ENCODE measurements at regions of chr1 and their contacts with region 1.

Region 1: DNA sequence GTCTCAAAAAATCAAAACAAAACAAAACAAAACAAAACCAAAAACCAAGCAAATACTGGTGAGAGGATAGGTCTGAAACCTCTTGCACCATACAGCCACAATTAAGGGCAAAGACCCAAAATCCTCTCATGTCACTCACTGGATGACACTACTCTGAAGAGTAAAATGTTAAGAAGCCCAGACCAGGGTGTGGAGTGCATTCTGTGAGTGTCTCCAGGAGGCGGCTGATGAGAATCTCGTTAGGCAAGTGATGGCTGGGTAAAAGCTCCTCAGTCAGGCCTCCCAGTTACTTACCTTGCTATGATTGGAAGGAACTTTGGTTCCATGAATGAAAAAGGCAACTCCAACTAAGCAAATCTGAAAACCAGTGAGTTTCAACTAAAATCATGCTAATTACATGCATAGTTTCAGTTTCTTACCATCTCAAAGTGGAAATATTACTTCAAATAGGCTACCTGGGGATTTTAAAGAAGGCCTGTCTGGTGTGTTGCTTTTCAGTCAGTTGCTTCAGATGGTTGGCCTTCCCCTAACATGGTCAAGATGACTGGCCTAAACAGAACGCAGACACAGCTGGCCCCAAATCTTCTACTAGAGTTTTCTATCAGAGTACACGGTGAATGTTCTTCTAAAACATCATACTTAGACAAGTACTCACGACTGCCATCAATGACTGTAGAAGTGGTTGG is 95.1 kb downstream of the KIAA0319L start:
- DNase-seq: no peak
- ATAC-seq: peak; percentile 46
- H3K4me3 ChIP-seq: no peak overlapping the region
- H3K4me3 Mint-ChIP-seq: no peak overlapping the region
- H3K27ac ChIP-seq: peak overlapping the region in 1 of 2 donors; percentile 18
- H3K27ac Mint-ChIP-seq: peak overlapping the region; percentile 58
- H3K4me1 ChIP-seq: peaks cover 3% of the 10 kb centered on the region
- H3K4me1 Mint-ChIP-seq: peaks cover 11% of the 10 kb centered on the region
- H3K27me3 ChIP-seq: no peaks in the 10 kb centered on the region
- H3K27me3 Mint-ChIP-seq: no peaks in the 10 kb centered on the region
- CTCF ChIP-seq: no peak

Region 2: GRCh38 chr1:34426325-34426891 is 1035.7 kb before region 1 on chr1:
- CTCF ChIA-PET with region 1: no interaction called
- POLR2A ChIA-PET with region 1: no interaction called
- intact Hi-C with region 1: no loop called
- DNase-seq: no peak
- ATAC-seq: no peak
- H3K4me3 ChIP-seq: no peak overlapping the region
- H3K4me3 Mint-ChIP-seq: no peak overlapping the region
- H3K27ac ChIP-seq: no peak overlapping the region
- H3K27ac Mint-ChIP-seq: no peak overlapping the region
- H3K4me1 ChIP-seq: no peaks in the 10 kb centered on the region
- H3K4me1 Mint-ChIP-seq: no peaks in the 10 kb centered on the region
- H3K27me3 ChIP-seq: peaks cover 0 to 5% of the 10 kb centered on the region in 2 experiments
- H3K27me3 Mint-ChIP-seq: peaks cover 27% of the 10 kb centered on the region
- CTCF ChIP-seq: no peak

Region 3: GRCh38 chr1:35499652-35500176 is 37.6 kb after region 1 on chr1:
- CTCF ChIA-PET with region 1: no interaction called
- POLR2A ChIA-PET with region 1: no interaction called
- intact Hi-C with region 1: loop called in 1 of 2 experiments (anchors 5 kb)
- DNase-seq: peak in 12 of 14 experiments; percentile 7 to 74 (median 18)
- ATAC-seq: peak; percentile 94
- H3K4me3 ChIP-seq: no peak overlapping the region
- H3K4me3 Mint-ChIP-seq: peak overlapping the region; percentile 39
- H3K27ac ChIP-seq: peak overlapping the region; percentile 19 to 33
- H3K27ac Mint-ChIP-seq: peak overlapping the region; percentile 90
- H3K4me1 ChIP-seq: peaks cover 13% of the 10 kb centered on the region
- H3K4me1 Mint-ChIP-seq: peaks cover 51% of the 10 kb centered on the region
- H3K27me3 ChIP-seq: no peaks in the 10 kb centered on the region
- H3K27me3 Mint-ChIP-seq: no peaks in the 10 kb centered on the region
- CTCF ChIP-seq: no peak

Region 4: DNA sequence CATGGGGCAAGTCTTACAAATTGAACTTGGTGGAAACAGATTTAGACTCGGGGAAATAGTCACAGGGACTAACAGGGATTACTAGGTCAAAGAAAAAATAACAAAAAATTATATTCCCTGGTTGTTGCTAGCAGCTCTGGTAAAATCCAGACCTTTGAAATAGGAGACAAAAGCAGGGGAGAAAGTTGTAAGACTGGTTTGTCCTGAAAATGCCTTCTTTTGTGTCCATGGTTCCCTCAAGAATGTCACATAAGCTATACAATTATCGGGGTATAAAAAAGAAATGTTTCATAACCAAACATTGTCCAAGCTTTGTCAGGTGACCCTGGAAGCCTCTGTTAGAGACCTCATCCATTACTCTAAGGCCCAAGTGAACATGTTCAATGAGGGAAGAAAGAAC is 62.0 kb after region 1 on chr1:
- CTCF ChIA-PET with region 1: no interaction called
- POLR2A ChIA-PET with region 1: no interaction called
- intact Hi-C with region 1: no loop called
- DNase-seq: no peak
- ATAC-seq: no peak
- H3K4me3 ChIP-seq: no peak overlapping the region
- H3K4me3 Mint-ChIP-seq: no peak overlapping the region
- H3K27ac ChIP-seq: no peak overlapping the region
- H3K27ac Mint-ChIP-seq: no peak overlapping the region
- H3K4me1 ChIP-seq: no peaks in the 10 kb centered on the region
- H3K4me1 Mint-ChIP-seq: peaks cover 15% of the 10 kb centered on the region
- H3K27me3 ChIP-seq: no peaks in the 10 kb centered on the region
- H3K27me3 Mint-ChIP-seq: no peaks in the 10 kb centered on the region
- CTCF ChIP-seq: no peak

Measured in CD4-positive, alpha-beta T cell (primary cell).